Cardiac septum (tissue), 1 donor: ENCODE measurements at regions of chr20 and their contacts with region 1.

Region 1: GRCh38 chr20:45934586-45935415 is at the start of gene PCIF1:
- DNase-seq: peak; percentile 99
- total RNA-seq, gene PCIF1: 30.2 TPM

Region 2: GRCh38 chr20:45812157-45813020 is 122.4 kb before region 1 on chr20 and contains the start of gene UBE2C:
- intact Hi-C with region 1: no loop called
- DNase-seq: peak; percentile 97
- total RNA-seq, gene UBE2C: 0.38 TPM

Region 3: GRCh38 chr20:45890985-45891983 is 43.5 kb before region 1 on chr20 and contains the starts of genes CTSA and NEURL2:
- intact Hi-C with region 1: loop called (anchors 1 kb)
- DNase-seq: peak; percentile 97
- total RNA-seq, gene CTSA: 111 TPM
- total RNA-seq, gene NEURL2: 7.6 TPM